B cell (primary cell): ENCODE measurements at regions of chr15 and their contacts with region 1.

Region 1: DNA sequence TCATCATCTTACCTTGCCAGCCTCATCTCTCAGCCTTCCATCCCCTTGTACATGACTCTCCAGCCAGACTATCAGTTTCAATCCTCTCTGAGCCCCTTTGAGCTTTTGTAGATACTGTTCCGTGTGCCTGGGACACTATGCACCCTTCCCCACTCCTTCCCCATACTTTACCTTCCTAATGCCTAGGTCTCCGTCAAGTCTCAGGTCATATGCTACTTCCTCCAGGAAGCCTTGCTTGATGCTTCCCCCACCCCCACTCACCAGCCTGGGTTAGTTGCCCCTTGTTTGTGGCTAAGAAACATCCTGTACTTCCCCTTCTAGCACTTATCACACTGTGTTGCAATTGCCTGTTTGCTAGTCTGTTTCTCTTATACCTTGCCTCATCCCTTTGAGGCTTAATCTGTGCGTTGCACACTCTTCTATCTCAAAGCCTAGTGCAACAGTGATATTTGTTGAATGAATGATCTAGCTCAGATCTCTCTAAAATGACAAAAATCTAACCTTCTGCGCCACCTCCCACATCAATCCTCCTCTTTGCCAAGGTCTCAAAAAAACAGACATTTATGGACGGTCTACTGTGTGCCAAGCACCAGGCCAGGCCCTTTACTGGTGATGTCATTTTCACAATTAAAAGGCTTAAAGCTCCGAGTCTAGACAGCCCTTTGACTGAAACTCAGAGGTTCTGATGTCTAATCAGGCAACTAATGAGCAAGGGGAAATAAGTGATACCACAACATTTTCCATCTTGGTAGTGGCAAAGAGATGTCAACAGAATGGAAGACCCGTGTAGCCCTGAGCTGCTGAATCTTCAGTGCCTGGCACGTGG is 6.5 kb upstream of the USP3 start:
- DNase-seq: peak; percentile 89
- ATAC-seq: peak; percentile 67
- H3K4me3 ChIP-seq: peak overlapping the region; percentile 6 to 48 (median 21)
- H3K4me3 Mint-ChIP-seq: no peak overlapping the region
- H3K27ac ChIP-seq: peak overlapping the region; percentile 81 to 86
- H3K27ac Mint-ChIP-seq: no peak overlapping the region
- H3K4me1 ChIP-seq: peaks cover 80% of the 10 kb centered on the region in 2 donors
- H3K4me1 Mint-ChIP-seq: peaks cover 65% of the 10 kb centered on the region
- H3K27me3 ChIP-seq: no peaks in the 10 kb centered on the region
- H3K27me3 Mint-ChIP-seq: no peaks in the 10 kb centered on the region
- CTCF ChIP-seq: no peak

Region 2: DNA sequence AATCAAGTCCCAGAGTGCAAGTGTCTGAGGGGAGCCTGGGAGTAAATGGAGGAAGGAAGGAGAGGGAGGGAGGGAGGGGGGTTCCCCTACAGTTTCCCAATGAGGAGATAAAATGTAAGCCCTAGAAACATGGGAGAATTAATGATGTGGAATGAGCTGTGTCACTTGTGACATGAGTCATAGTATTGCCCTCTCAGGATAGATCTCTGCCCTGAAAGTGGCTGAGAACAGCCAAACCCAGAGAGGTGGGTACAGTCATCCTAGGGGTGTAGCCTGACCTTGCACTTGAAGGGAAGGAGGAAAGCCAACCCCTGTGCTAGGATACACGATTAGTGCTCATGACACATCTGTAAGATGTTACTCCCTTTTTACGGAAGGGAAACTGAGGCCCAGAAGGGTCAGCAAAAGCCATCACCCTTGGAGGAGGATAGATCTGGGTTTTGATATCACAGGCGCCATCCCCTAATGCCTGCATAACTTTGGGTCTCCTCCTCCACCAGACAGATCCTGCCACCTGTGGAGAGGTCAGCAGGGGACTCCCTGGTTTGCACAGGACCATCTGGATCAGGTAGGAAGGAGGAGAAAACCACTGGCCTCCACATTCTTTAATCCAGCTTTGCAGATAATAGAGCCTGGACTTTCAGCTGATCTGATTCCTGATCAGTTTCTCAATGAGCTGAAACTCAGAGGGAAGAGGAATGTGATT is 16.6 kb before region 1 on chr15:
- CTCF ChIA-PET with region 1: interaction called, 115 read pairs
- POLR2A ChIA-PET with region 1: interaction called, 172 read pairs
- intact Hi-C with region 1: loop called (anchors 1 kb)
- DNase-seq: no peak
- ATAC-seq: peak; percentile 13
- H3K4me3 ChIP-seq: peak overlapping the region in 1 of 5 experiments; percentile 24
- H3K4me3 Mint-ChIP-seq: peak overlapping the region; percentile 79
- H3K27ac ChIP-seq: peak overlapping the region; percentile 95 to 98
- H3K27ac Mint-ChIP-seq: peak overlapping the region; percentile 98
- H3K4me1 ChIP-seq: peaks cover 75 to 82% of the 10 kb centered on the region in 2 donors
- H3K4me1 Mint-ChIP-seq: peaks cover 77% of the 10 kb centered on the region
- H3K27me3 ChIP-seq: no peaks in the 10 kb centered on the region
- H3K27me3 Mint-ChIP-seq: no peaks in the 10 kb centered on the region
- CTCF ChIP-seq: no peak

Region 3: GRCh38 chr15:63487076-63487757 is 10.6 kb before region 1 on chr15:
- CTCF ChIA-PET with region 1: interaction called, 142 read pairs
- POLR2A ChIA-PET with region 1: interaction called, 172 read pairs
- intact Hi-C with region 1: loop called (anchors 1 kb)
- DNase-seq: peak; percentile 86
- ATAC-seq: peak; percentile 68
- H3K4me3 ChIP-seq: no peak overlapping the region
- H3K4me3 Mint-ChIP-seq: peak overlapping the region; percentile 80
- H3K27ac ChIP-seq: no peak overlapping the region
- H3K27ac Mint-ChIP-seq: peak overlapping the region; percentile 89
- H3K4me1 ChIP-seq: peaks cover 53 to 78% of the 10 kb centered on the region in 2 donors
- H3K4me1 Mint-ChIP-seq: peaks cover 64% of the 10 kb centered on the region
- H3K27me3 ChIP-seq: no peaks in the 10 kb centered on the region
- H3K27me3 Mint-ChIP-seq: no peaks in the 10 kb centered on the region
- CTCF ChIP-seq: peak; percentile 90